B cell (primary cell): ENCODE measurements at regions of chr7 and their contacts with region 1.

Region 1: DNA sequence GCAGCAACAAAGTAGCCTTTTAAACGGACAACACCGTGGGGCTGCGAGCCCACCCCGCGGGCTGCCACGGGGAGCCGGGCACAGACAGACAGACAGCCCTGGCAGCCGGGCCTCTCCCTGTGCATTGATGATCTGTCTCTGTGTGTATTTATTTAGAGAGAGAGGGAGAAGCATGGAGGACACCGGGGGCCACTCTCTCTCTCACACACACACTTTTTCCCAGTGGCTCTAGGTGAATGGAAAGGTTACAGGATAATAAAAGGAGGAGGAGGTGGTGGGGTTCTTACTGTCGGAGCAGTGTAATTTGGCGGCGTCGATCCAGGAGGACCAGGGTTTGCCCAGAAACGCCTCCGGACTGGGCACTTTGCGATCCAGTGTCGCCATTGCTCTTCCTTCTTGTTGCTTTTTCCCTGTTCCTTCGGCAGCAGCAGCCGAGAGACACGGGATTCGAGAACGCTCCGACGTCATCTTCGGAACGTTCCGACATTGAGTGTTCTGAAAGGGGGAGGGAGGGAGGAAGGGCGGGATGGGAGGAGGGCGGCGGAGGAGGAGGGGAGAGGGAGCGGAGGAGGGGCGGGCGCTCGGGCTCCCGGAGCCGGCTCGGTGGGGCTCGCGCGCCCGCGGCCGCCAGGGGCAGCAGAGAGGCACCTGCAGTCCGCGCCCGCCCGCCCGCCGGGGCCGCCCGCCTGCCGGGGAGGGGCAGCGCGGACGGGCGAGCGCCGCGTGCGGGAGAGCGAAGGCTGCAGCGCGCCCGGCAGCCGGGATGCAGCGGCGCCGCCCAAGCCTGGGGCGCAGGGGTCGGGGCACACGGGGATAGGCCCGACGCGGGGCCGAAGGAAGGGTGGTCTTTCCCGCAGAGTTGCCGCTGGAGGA is at the start of gene ATXN7L1:
- DNase-seq: peak; percentile 87
- ATAC-seq: peak; percentile 99
- H3K4me3 ChIP-seq: peak within 1 kb of the TSS; percentile 47 to 68 (median 64)
- H3K4me3 Mint-ChIP-seq: peak within 1 kb of the TSS; percentile 90
- H3K27ac ChIP-seq: no peak within 1 kb of the TSS
- H3K27ac Mint-ChIP-seq: peak within 1 kb of the TSS; percentile 42
- H3K4me1 ChIP-seq: peaks cover 13 to 15% of the 10 kb centered on the region in 2 donors
- H3K4me1 Mint-ChIP-seq: peaks cover 23% of the 10 kb centered on the region
- H3K27me3 ChIP-seq: peaks cover 0 to 25% (median 8%) of the 10 kb centered on the region in 4 experiments
- H3K27me3 Mint-ChIP-seq: peaks cover 14% of the 10 kb centered on the region
- CTCF ChIP-seq: peak; percentile 31
- total RNA-seq, gene ATXN7L1: 37.0 and 40.6 TPM in 2 replicates

Region 2: DNA sequence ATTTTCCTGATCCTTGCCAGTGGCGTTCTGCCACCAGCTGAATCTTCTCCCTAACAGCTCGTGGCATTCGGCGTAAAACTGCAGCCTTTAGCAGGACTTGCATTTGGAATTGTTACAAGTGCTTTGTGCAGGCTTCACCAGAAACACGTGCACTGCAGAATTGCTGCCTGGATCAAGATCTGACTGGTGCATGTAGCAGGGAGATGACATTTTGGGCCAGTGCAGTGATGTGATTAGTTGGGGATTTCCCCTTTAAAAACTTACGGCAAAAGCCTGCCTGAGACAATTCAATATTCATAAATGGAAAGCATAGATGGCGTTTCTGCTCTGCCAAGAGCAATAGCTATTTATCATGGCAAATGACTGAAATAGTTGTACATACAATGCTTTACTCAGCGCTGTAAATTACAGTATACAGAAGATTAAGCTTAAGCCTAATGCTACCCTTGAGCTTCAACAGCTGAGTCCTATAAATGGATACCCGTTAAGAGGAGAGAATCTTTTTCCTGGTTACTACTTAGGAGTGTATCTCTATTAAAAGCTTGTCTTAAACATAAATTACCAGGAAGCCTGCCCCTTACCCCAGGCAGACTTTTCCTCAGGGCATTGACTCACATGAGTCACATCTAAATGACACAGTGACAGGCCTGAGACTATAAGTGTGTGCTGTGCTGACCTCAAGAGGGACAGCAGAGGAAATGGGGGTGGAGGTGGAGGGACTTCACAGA is 106.3 kb before region 1 on chr7:
- CTCF ChIA-PET with region 1: no interaction called
- POLR2A ChIA-PET with region 1: no interaction called
- intact Hi-C with region 1: loop called (anchors 5 kb)
- DNase-seq: peak; percentile 35
- ATAC-seq: peak; percentile 82
- H3K4me3 ChIP-seq: no peak overlapping the region
- H3K4me3 Mint-ChIP-seq: peak overlapping the region; percentile 67
- H3K27ac ChIP-seq: no peak overlapping the region
- H3K27ac Mint-ChIP-seq: no peak overlapping the region
- H3K4me1 ChIP-seq: peaks cover 7 to 18% of the 10 kb centered on the region in 2 donors
- H3K4me1 Mint-ChIP-seq: peaks cover 35% of the 10 kb centered on the region
- H3K27me3 ChIP-seq: peaks cover 0 to 2% (median under 1%) of the 10 kb centered on the region in 4 experiments
- H3K27me3 Mint-ChIP-seq: peaks cover 5% of the 10 kb centered on the region
- CTCF ChIP-seq: no peak

Region 3: GRCh38 chr7:105808703-105809590 is 67.4 kb before region 1 on chr7:
- CTCF ChIA-PET with region 1: interaction called, 4 read pairs
- POLR2A ChIA-PET with region 1: no interaction called
- intact Hi-C with region 1: loop called (anchors 2 kb)
- DNase-seq: peak; percentile 83
- ATAC-seq: peak; percentile 97
- H3K4me3 ChIP-seq: no peak overlapping the region
- H3K4me3 Mint-ChIP-seq: peak overlapping the region; percentile 30
- H3K27ac ChIP-seq: peak overlapping the region; percentile 38 to 58
- H3K27ac Mint-ChIP-seq: peak overlapping the region; percentile 46
- H3K4me1 ChIP-seq: peaks cover 21 to 41% of the 10 kb centered on the region in 2 donors
- H3K4me1 Mint-ChIP-seq: peaks cover 41% of the 10 kb centered on the region
- H3K27me3 ChIP-seq: no peaks in the 10 kb centered on the region
- H3K27me3 Mint-ChIP-seq: no peaks in the 10 kb centered on the region
- CTCF ChIP-seq: no peak

Region 4: DNA sequence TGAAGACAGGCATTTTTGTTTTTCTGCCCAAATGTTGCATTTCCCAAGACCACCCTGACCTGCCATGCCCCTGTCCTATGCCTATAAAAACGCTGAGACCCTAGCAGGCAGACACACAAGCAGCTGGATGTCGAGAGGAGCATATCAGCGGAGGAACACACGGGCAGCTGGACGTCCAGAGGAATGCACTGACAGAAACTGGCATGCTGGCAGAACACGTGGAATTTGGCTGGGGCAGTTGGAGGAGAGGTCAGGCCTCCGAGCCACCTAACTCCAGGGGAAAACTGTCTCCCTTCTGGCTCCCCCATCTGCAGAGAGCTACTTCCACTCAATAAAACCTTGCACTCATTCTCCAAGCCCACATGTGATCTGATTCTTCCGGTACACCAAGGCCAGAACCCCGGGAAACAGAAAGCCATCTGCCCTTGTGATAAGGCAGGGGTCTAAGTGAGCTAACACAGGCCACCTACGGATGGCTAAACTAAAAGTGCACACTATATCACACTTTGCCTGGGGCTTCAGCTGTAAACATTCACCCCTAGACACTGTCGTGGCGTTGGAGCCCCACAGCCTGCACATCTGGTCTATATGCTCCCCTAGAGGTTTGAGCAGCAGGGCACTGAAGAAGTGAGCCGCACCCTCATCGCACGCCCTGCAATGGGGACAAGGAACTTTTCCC is 76.7 kb after region 1 on chr7:
- CTCF ChIA-PET with region 1: no interaction called
- POLR2A ChIA-PET with region 1: no interaction called
- intact Hi-C with region 1: no loop called
- DNase-seq: no peak
- ATAC-seq: no peak
- H3K4me3 ChIP-seq: no peak overlapping the region
- H3K4me3 Mint-ChIP-seq: no peak overlapping the region
- H3K27ac ChIP-seq: no peak overlapping the region
- H3K27ac Mint-ChIP-seq: no peak overlapping the region
- H3K4me1 ChIP-seq: no peaks in the 10 kb centered on the region
- H3K4me1 Mint-ChIP-seq: no peaks in the 10 kb centered on the region
- H3K27me3 ChIP-seq: peaks cover 0 to 5% (median 0%) of the 10 kb centered on the region in 4 experiments
- H3K27me3 Mint-ChIP-seq: no peaks in the 10 kb centered on the region
- CTCF ChIP-seq: no peak

Region 5: GRCh38 chr7:106009403-106010226 is 133.3 kb after region 1 on chr7:
- CTCF ChIA-PET with region 1: interaction called, 5 read pairs
- POLR2A ChIA-PET with region 1: no interaction called
- intact Hi-C with region 1: loop called (anchors 2 kb)
- DNase-seq: peak; percentile 80
- ATAC-seq: peak; percentile 98
- H3K4me3 ChIP-seq: no peak overlapping the region
- H3K4me3 Mint-ChIP-seq: peak overlapping the region; percentile 46
- H3K27ac ChIP-seq: no peak overlapping the region
- H3K27ac Mint-ChIP-seq: peak overlapping the region; percentile 28
- H3K4me1 ChIP-seq: peaks cover 17 to 18% of the 10 kb centered on the region in 2 donors
- H3K4me1 Mint-ChIP-seq: peaks cover 18% of the 10 kb centered on the region
- H3K27me3 ChIP-seq: peaks cover 0 to 4% (median under 1%) of the 10 kb centered on the region in 4 experiments
- H3K27me3 Mint-ChIP-seq: peaks cover 4% of the 10 kb centered on the region
- CTCF ChIP-seq: peak; percentile 88

Region 6: GRCh38 chr7:106031300-106032035 is 155.1 kb after region 1 on chr7:
- CTCF ChIA-PET with region 1: no interaction called
- POLR2A ChIA-PET with region 1: no interaction called
- intact Hi-C with region 1: no loop called
- DNase-seq: no peak
- ATAC-seq: no peak
- H3K4me3 ChIP-seq: no peak overlapping the region
- H3K4me3 Mint-ChIP-seq: no peak overlapping the region
- H3K27ac ChIP-seq: no peak overlapping the region
- H3K27ac Mint-ChIP-seq: peak overlapping the region; percentile 15
- H3K4me1 ChIP-seq: peaks cover 13 to 19% of the 10 kb centered on the region in 2 donors
- H3K4me1 Mint-ChIP-seq: peaks cover 41% of the 10 kb centered on the region
- H3K27me3 ChIP-seq: no peaks in the 10 kb centered on the region
- H3K27me3 Mint-ChIP-seq: peaks cover 11% of the 10 kb centered on the region
- CTCF ChIP-seq: no peak

Region 7: DNA sequence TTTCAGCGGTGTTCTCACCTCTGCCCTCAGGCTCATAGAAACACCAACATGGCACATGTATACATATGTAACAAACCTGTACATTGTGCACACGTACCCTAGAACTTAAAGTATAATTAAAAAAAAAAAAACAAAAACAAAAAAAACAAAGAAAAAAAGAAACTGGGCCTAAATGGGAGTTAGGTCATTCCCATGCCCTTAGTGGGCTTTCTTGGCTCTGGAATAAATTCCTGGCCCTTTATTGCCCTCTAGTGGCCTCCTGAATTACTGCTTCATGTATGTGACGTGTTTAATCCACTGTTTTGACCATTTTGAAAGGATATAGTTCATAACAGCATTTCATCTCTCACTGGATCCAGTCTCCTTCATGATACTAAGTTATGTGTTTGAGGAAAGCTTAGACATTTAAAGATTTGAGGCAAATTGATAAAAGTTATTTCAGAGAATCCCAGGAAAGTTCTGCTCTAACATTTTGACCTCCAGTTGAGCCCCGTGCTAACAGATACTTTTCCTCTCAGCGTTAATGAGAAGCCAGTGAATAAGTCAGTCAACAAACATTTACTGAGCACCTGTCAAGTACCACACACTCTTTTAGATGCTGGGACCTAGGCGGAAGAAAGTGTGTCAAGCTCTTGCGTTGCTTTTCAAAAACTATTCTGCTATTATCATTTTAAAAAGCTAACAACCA is 290.5 kb after region 1 on chr7:
- CTCF ChIA-PET with region 1: interaction called, 4 read pairs
- POLR2A ChIA-PET with region 1: no interaction called
- intact Hi-C with region 1: loop called (anchors 5 kb)
- DNase-seq: peak; percentile 73
- ATAC-seq: peak; percentile 47
- H3K4me3 ChIP-seq: no peak overlapping the region
- H3K4me3 Mint-ChIP-seq: no peak overlapping the region
- H3K27ac ChIP-seq: no peak overlapping the region
- H3K27ac Mint-ChIP-seq: no peak overlapping the region
- H3K4me1 ChIP-seq: no peaks in the 10 kb centered on the region
- H3K4me1 Mint-ChIP-seq: peaks cover 10% of the 10 kb centered on the region
- H3K27me3 ChIP-seq: peaks cover 0 to 8% (median 0%) of the 10 kb centered on the region in 4 experiments
- H3K27me3 Mint-ChIP-seq: no peaks in the 10 kb centered on the region
- CTCF ChIP-seq: peak; percentile 95